Activated CD4-positive, alpha-beta T cell treated with anti-CD3 and anti-CD28 coated beads for 36 hours (primary cell): ENCODE measurements at regions of chr10 and their contacts with region 1.

Region 1: GRCh38 chr10:118241229-118242137 is 100.6 kb downstream of the FAM204A start:
- DNase-seq: peak; percentile 81
- ATAC-seq: no peak
- H3K4me3 Mint-ChIP-seq: no peak overlapping the region
- H3K27ac Mint-ChIP-seq: no peak overlapping the region
- H3K4me1 Mint-ChIP-seq: no peaks in the 10 kb centered on the region
- H3K27me3 Mint-ChIP-seq: peaks cover 36% of the 10 kb centered on the region

Region 2: DNA sequence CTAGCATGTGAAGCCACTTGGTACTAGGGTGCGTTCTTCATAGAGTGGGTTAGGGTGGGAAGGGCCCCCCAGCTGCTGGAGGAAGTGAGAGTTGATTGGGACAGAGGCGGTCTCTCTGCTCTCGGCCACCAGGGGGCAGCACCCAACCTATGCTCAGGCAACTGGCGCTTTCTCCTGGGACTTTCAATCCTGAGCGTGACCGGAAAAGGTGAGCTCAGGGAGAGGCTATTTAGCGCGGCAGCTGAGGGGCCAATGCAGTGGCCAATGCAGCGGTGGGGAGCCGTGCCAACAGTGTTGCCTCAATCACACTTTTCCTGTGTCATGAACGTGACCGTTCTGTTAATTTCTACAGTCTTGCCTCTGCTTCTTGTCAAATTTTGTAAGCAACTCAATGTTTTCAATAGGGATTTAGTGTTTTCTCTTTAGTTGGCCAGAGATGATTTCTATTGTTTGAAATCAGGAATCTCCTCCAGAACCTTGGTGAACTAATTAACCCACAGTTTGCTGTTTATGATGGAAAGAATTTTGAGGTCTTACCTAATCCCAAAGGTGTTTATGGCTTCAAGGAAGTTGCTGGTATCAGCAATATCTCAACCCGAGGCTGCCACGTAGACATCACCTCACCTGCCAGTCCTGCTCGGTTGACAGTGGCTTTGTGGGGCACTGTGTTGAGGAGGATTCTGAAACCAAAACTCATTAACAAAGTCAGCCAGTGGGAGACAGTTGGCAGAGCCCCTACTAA is 798.4 kb before region 1 on chr10:
- CTCF ChIA-PET with region 1: interaction called, 3 read pairs
- POLR2A ChIA-PET with region 1: no interaction called
- intact Hi-C with region 1: loop called in 1 of 2 experiments (anchors 1 kb)
- DNase-seq: peak; percentile 81
- ATAC-seq: peak; percentile 63
- H3K4me3 Mint-ChIP-seq: no peak overlapping the region
- H3K27ac Mint-ChIP-seq: no peak overlapping the region
- H3K4me1 Mint-ChIP-seq: peaks cover 6% of the 10 kb centered on the region
- H3K27me3 Mint-ChIP-seq: peaks cover 15% of the 10 kb centered on the region

Region 3: GRCh38 chr10:117860823-117861222 is 380.7 kb before region 1 on chr10:
- CTCF ChIA-PET with region 1: no interaction called
- POLR2A ChIA-PET with region 1: no interaction called
- intact Hi-C with region 1: loop called in 1 of 2 experiments (anchors 2 kb)
- DNase-seq: no peak
- ATAC-seq: no peak
- H3K4me3 Mint-ChIP-seq: no peak overlapping the region
- H3K27ac Mint-ChIP-seq: no peak overlapping the region
- H3K4me1 Mint-ChIP-seq: no peaks in the 10 kb centered on the region
- H3K27me3 Mint-ChIP-seq: peaks cover 11% of the 10 kb centered on the region

Region 4: GRCh38 chr10:118220346-118220850 is 21.1 kb before region 1 on chr10:
- CTCF ChIA-PET with region 1: no interaction called
- POLR2A ChIA-PET with region 1: no interaction called
- intact Hi-C with region 1: no loop called
- DNase-seq: no peak
- ATAC-seq: no peak
- H3K4me3 Mint-ChIP-seq: no peak overlapping the region
- H3K27ac Mint-ChIP-seq: no peak overlapping the region
- H3K4me1 Mint-ChIP-seq: no peaks in the 10 kb centered on the region
- H3K27me3 Mint-ChIP-seq: peaks cover 21% of the 10 kb centered on the region